ENCODE measurements at regions of chrX and their contacts with region 1.

Region 1: GRCh38 chrX:109347632-109348031 is 134.3 kb downstream of the GUCY2F start:
- DNase-seq: peak; percentile 72
- H3K4me3 ChIP-seq: no peak overlapping the region
- H3K27ac ChIP-seq: peak overlapping the region; percentile 3
- H3K4me1 ChIP-seq: peaks cover 28% of the 10 kb centered on the region
- H3K27me3 ChIP-seq: no peaks in the 10 kb centered on the region
- CTCF ChIP-seq: no peak
- POLR2A ChIP-seq: no peak

Region 2: GRCh38 chrX:109281483-109282275 is 66.0 kb before region 1 on chrX:
- CTCF ChIA-PET with region 1: no interaction called
- POLR2A ChIA-PET with region 1: no interaction called
- dilution Hi-C with region 1: no loop called
- intact Hi-C with region 1: loop called (anchors 1 kb)
- DNase-seq: peak; percentile 65
- H3K4me3 ChIP-seq: no peak overlapping the region
- H3K27ac ChIP-seq: no peak overlapping the region
- H3K4me1 ChIP-seq: no peaks in the 10 kb centered on the region
- H3K27me3 ChIP-seq: peaks cover 2 to 11% of the 10 kb centered on the region in 2 experiments
- CTCF ChIP-seq: no peak
- POLR2A ChIP-seq: no peak

Region 3: DNA sequence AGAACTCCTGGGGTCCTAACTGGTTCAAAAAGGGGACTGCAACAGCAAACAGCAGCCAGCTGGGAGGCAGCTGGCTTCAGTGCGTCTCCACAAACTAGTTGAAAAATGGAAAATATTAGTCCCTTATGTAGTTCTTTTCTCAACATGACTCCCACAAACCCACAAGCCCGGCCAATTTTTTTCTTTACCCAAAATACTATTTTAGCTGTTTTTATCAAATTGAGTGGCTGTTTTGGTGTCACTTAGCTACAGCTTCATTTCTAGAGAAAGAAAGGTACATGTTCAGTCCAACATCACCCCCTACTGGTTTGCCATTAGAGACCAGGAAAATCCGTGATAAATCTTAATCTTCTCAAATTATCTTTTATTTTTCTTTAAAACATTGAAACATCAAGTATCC is 37.1 kb after region 1 on chrX:
- CTCF ChIA-PET with region 1: interaction called, 11 read pairs
- POLR2A ChIA-PET with region 1: no interaction called
- dilution Hi-C with region 1: no loop called
- intact Hi-C with region 1: loop called (anchors 5 kb)
- DNase-seq: peak; percentile 28
- H3K4me3 ChIP-seq: no peak overlapping the region
- H3K27ac ChIP-seq: no peak overlapping the region
- H3K4me1 ChIP-seq: no peaks in the 10 kb centered on the region
- H3K27me3 ChIP-seq: peaks cover 0 to 1% of the 10 kb centered on the region in 2 experiments
- CTCF ChIP-seq: peak; percentile 10 to 29
- POLR2A ChIP-seq: no peak

Measured in endothelial cell of umbilical vein (primary cell).